Calu3 (cell line): ENCODE measurements at regions of chr3 and their contacts with region 1.

Region 1: DNA sequence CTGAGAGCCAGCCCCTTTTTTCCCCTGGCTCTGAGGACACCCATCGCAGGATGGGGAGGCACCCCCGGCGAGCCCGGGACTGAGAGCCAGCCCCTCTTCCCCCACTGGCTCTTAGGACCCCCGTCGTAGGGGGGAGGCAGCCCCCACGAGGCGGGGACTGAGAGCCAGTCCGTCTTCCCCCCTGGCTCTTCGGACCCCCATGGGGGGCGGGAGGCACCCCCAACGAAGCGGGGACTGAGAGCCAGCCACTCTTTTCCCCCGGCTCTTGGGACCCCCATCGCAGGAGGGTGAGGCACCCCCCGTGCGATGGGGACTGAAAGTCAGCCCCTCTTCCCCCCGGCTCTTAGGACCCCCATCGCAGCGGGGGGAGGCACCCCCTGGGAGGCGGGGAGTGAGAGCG is 36.8 kb upstream of the SSUH2 start:
- DNase-seq: no peak
- H3K4me3 Mint-ChIP-seq: no peak overlapping the region
- H3K27ac Mint-ChIP-seq: no peak overlapping the region
- H3K4me1 Mint-ChIP-seq: peaks cover 24% of the 10 kb centered on the region
- H3K27me3 Mint-ChIP-seq: no peaks in the 10 kb centered on the region
- CTCF ChIP-seq: no peak

Region 2: GRCh38 chr3:8769088-8769822 is 87.9 kb after region 1 on chr3 and contains the start of gene OXTR:
- CTCF ChIA-PET with region 1: interaction called, 6 read pairs
- intact Hi-C with region 1: loop called (anchors 5 kb)
- DNase-seq: peak; percentile 85
- H3K4me3 Mint-ChIP-seq: peak within 1 kb of the TSS; percentile 75
- H3K27ac Mint-ChIP-seq: peak within 1 kb of the TSS; percentile 46
- H3K4me1 Mint-ChIP-seq: peaks cover 6% of the 10 kb centered on the region
- H3K27me3 Mint-ChIP-seq: peaks cover 13% of the 10 kb centered on the region
- CTCF ChIP-seq: peak; percentile 96
- total RNA-seq, gene OXTR: 2.8 and 3.4 TPM in 2 replicates